ENCODE measurements at regions of chr12 and their contacts with region 1.

Region 1: GRCh38 chr12:76586764-76587395 is 27.3 kb upstream of the OSBPL8 start:
- DNase-seq: peak in 1 of 2 donors; percentile 76
- ATAC-seq: peak; percentile 49 to 57 (median 54)
- H3K4me3 ChIP-seq: no peak overlapping the region
- H3K4me3 Mint-ChIP-seq: no peak overlapping the region
- H3K27ac ChIP-seq: no peak overlapping the region
- H3K27ac Mint-ChIP-seq: peak overlapping the region in 1 of 2 donors; percentile 59
- H3K4me1 ChIP-seq: peaks cover 7% of the 10 kb centered on the region
- H3K4me1 Mint-ChIP-seq: peaks cover 12 to 30% of the 10 kb centered on the region in 2 donors
- H3K27me3 ChIP-seq: no peaks in the 10 kb centered on the region
- H3K27me3 Mint-ChIP-seq: no peaks in the 10 kb centered on the region
- CTCF ChIP-seq: peak; percentile 72

Region 2: DNA sequence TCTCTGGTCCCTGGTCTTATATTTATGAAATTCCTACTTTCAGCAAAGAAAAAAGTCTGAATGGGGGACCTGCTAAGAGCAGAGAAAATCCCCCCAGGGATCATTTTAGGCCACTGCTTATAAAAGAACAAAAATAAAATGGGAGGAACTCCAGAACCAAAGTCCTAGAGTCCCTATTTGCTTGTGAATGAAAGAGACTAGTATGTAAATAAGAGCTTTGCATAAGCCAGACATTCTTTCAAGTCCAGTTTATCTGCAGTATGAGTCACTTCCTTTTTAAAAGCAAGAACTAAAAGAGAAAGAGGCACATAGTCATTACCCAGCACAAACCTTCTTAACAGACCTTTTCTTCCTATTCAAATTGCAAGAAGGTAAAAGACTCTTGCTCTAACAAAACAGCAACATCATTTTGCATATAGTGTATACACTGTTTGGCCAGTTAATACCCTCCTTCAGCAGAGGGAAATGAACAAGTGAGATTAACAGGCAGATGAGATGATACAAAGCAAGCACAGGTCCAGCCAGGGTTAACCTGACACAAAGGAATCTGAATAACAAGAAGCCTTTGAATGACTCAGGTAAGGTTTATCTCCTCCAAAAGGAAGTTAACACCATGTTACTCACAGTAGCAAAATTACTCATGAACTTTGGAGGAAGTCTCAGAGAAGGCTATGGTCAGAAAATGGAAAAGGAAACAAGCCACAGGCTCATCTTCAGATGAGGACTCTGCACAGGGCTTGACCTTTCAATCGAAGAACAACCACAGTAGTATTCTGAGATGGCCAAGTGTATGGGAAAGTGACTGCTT is 642.6 kb before region 1 on chr12:
- intact Hi-C with region 1: no loop called
- DNase-seq: peak in 1 of 2 donors; percentile 52
- ATAC-seq: peak; percentile 89 to 93 (median 92)
- H3K4me3 ChIP-seq: no peak overlapping the region
- H3K4me3 Mint-ChIP-seq: peak overlapping the region; percentile 80
- H3K27ac ChIP-seq: peak overlapping the region; percentile 68
- H3K27ac Mint-ChIP-seq: peak overlapping the region; percentile 93 to 96
- H3K4me1 ChIP-seq: peaks cover 9% of the 10 kb centered on the region
- H3K4me1 Mint-ChIP-seq: peaks cover 18 to 21% of the 10 kb centered on the region in 2 donors
- H3K27me3 ChIP-seq: no peaks in the 10 kb centered on the region
- H3K27me3 Mint-ChIP-seq: no peaks in the 10 kb centered on the region
- CTCF ChIP-seq: no peak

Region 3: GRCh38 chr12:76348079-76348901 is 238.6 kb before region 1 on chr12 and contains the start of gene BBS10:
- intact Hi-C with region 1: loop called (anchors 2 kb)
- DNase-seq: peak; percentile 74 to 92
- ATAC-seq: peak; percentile 97 to 99 (median 97)
- H3K4me3 ChIP-seq: peak within 1 kb of the TSS; percentile 65
- H3K4me3 Mint-ChIP-seq: peak within 1 kb of the TSS; percentile 93
- H3K27ac ChIP-seq: peak within 1 kb of the TSS; percentile 89
- H3K27ac Mint-ChIP-seq: peak within 1 kb of the TSS; percentile 84 to 91
- H3K4me1 ChIP-seq: peaks cover 9% of the 10 kb centered on the region
- H3K4me1 Mint-ChIP-seq: peaks cover 19 to 20% of the 10 kb centered on the region in 2 donors
- H3K27me3 ChIP-seq: no peaks in the 10 kb centered on the region
- H3K27me3 Mint-ChIP-seq: no peaks in the 10 kb centered on the region
- CTCF ChIP-seq: peak; percentile 36
- total RNA-seq, gene BBS10: 2.8 to 4.0 (median 3.3) TPM

Region 4: DNA sequence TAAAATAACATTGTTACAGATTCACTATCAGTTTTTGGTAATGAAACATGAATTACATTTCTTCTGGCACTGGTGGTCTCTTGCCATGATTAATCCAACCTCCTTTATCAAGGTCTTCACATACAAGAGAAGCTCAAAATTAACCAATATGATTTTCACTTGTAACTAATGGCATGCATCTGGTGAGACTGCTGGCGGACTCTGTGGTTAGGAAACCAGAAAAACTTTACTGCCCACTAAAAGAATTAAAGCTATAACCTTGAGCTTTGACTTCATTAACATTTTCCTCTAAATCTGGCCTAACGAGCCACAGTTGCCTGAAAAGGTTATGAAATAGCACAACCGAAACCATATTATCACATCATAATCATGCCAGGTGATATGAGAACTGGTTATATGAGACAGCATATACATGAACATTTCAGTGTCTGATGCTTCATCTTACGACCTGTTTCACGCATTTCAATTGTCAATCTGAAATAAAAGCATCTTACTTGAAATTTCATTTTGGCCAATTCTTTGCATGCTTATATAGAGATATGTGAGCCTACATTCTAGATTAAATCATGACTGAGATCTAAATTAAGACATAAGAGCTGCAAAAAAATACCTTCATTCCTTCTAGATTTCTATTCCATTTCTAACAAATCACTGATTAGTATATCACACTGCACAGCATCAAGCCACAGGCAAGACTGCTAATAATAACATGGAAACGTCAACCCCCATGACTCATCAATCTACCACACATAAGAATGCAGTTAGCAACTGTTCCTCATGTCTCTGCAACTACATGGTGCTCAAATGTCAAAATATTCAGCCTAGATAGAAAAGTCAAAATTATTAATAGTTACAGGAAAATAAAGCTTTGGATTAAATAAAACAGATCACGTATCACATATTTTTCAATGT is 116.6 kb before region 1 on chr12:
- intact Hi-C with region 1: loop called (anchors 5 kb)
- DNase-seq: peak in 1 of 2 donors; percentile 15
- ATAC-seq: peak; percentile 82 to 96 (median 88)
- H3K4me3 ChIP-seq: no peak overlapping the region
- H3K4me3 Mint-ChIP-seq: no peak overlapping the region
- H3K27ac ChIP-seq: no peak overlapping the region
- H3K27ac Mint-ChIP-seq: no peak overlapping the region
- H3K4me1 ChIP-seq: no peaks in the 10 kb centered on the region
- H3K4me1 Mint-ChIP-seq: peaks cover 15 to 16% of the 10 kb centered on the region in 2 donors
- H3K27me3 ChIP-seq: no peaks in the 10 kb centered on the region
- H3K27me3 Mint-ChIP-seq: no peaks in the 10 kb centered on the region
- CTCF ChIP-seq: no peak

Region 5: DNA sequence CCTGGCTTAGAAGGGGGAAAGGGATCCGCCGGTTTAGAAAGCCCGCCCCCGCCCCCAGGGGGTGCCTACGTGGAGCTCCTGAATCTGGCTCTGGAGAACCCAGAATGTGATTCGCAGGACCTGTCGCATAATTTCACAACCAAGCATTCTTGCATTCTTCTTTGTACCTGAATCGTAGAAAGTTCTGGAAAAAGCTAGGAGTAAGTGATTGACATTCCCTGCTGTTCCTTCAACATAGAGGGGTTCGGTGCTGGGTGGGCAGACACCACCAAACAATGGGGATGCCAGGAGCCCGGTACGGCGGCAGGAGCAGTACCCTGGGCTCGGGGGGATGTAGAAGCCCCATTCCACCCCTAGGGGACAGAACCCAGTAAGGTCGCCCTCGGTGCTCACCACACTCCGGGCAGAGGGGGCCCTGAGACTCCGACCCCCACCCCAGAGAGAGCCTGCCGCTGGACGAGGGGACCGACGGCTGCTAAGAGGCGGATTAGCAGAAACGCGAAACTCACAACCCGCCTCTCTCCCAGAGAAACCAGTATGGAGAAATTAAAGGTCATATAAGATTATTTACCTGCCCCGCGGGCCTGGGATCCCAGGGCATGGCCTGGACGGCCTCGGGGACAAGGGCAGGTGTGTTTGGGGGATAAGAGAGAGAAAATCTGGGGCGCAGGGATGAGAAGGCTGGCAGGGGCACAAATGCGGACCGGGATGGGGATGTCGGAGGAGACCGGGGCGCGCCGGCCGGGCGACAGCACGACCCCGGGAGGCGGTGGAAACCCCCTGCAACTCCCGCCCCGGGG is 291.4 kb after region 1 on chr12:
- intact Hi-C with region 1: no loop called
- DNase-seq: peak in 1 of 2 donors; percentile 23
- ATAC-seq: peak in 2 of 3 donors; percentile 37 to 53
- H3K4me3 ChIP-seq: peak overlapping the region; percentile 35
- H3K4me3 Mint-ChIP-seq: peak overlapping the region; percentile 97
- H3K27ac ChIP-seq: no peak overlapping the region
- H3K27ac Mint-ChIP-seq: peak overlapping the region in 1 of 2 donors; percentile 81
- H3K4me1 ChIP-seq: peaks cover 13% of the 10 kb centered on the region
- H3K4me1 Mint-ChIP-seq: peaks cover 13 to 20% of the 10 kb centered on the region in 2 donors
- H3K27me3 ChIP-seq: peaks cover 20% of the 10 kb centered on the region
- H3K27me3 Mint-ChIP-seq: peaks cover 44 to 48% of the 10 kb centered on the region in 2 donors
- CTCF ChIP-seq: no peak

Measured in natural killer cell (primary cell).